Dendritic cell treated with granulocyte-macrophage colony-stimulating factor and Interleukin-4, amounts not matched to agents 40 ng/mL and 50 ng/mL, for 4 days (primary cell): ENCODE measurements at regions of chr17 and their contacts with region 1.

Region 1: GRCh38 chr17:66567234-66568170 is 265.1 kb downstream of the PRKCA start:
- H3K4me3 Mint-ChIP-seq: no peak overlapping the region
- H3K27ac Mint-ChIP-seq: no peak overlapping the region
- H3K4me1 Mint-ChIP-seq: peaks cover 20% of the 10 kb centered on the region
- H3K27me3 Mint-ChIP-seq: peaks cover 2% of the 10 kb centered on the region

Region 2: GRCh38 chr17:66198242-66198641 is 369.3 kb before region 1 on chr17:
- intact Hi-C with region 1: loop called (anchors 5 kb)
- H3K4me3 Mint-ChIP-seq: no peak overlapping the region
- H3K27ac Mint-ChIP-seq: no peak overlapping the region
- H3K4me1 Mint-ChIP-seq: peaks cover 6% of the 10 kb centered on the region
- H3K27me3 Mint-ChIP-seq: peaks cover 4% of the 10 kb centered on the region

Region 3: GRCh38 chr17:66255112-66255511 is 312.4 kb before region 1 on chr17:
- intact Hi-C with region 1: loop called (anchors 1 kb)
- H3K4me3 Mint-ChIP-seq: no peak overlapping the region
- H3K27ac Mint-ChIP-seq: no peak overlapping the region
- H3K4me1 Mint-ChIP-seq: no peaks in the 10 kb centered on the region
- H3K27me3 Mint-ChIP-seq: peaks cover 10% of the 10 kb centered on the region

Region 4: DNA sequence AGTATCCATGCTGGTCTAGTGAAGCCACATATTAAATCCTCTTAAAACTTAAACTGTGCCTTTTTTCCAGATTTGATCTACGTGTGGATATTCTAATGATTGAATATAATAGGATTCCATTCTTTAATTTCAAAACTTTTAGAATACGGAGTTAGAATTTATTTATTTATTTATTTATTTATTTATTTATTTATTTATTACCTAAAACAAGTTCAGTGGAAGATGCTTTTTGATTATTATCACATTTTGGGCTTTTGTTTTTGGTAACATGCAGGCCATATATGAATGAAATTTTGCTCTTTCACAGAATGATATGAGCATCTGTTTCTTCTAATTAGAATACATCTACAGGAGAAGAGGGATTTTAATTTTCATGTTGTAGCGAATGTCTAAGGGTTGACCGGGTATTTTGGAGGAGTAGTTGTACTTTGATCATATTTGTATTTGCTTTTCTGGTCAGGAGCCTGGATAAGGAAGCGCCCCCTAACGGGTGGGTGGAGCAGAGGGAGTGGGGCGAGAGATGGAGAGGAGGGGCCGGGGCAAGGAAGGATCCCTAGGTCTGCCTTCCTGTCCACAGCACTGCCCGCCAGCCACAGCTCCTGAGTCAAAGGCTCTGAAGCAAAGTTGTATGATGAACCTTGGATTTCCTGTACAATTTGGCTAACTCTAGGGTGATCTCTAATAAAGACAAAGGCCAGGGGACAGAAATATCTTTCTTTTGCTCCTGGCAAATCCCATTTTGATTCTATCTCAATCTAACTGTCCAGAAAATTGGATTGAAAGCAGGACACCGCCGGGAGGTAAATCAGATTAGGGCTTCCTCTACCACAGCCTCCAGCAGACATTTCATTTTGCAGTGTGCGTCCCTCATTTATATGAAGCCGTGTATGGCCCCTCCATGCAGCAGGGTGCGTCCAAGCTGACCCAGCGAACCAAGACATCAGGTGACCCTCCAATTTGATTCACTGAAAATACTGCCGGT is 116.0 kb before region 1 on chr17:
- intact Hi-C with region 1: no loop called
- H3K4me3 Mint-ChIP-seq: no peak overlapping the region
- H3K27ac Mint-ChIP-seq: peak overlapping the region; percentile 70
- H3K4me1 Mint-ChIP-seq: peaks cover 51% of the 10 kb centered on the region
- H3K27me3 Mint-ChIP-seq: no peaks in the 10 kb centered on the region